Activated CD4-positive, alpha-beta memory T cell treated with anti-CD3 and anti-CD28 coated beads for 36 hours (primary cell): ENCODE measurements at regions of chr4 and their contacts with region 1.

Region 1: DNA sequence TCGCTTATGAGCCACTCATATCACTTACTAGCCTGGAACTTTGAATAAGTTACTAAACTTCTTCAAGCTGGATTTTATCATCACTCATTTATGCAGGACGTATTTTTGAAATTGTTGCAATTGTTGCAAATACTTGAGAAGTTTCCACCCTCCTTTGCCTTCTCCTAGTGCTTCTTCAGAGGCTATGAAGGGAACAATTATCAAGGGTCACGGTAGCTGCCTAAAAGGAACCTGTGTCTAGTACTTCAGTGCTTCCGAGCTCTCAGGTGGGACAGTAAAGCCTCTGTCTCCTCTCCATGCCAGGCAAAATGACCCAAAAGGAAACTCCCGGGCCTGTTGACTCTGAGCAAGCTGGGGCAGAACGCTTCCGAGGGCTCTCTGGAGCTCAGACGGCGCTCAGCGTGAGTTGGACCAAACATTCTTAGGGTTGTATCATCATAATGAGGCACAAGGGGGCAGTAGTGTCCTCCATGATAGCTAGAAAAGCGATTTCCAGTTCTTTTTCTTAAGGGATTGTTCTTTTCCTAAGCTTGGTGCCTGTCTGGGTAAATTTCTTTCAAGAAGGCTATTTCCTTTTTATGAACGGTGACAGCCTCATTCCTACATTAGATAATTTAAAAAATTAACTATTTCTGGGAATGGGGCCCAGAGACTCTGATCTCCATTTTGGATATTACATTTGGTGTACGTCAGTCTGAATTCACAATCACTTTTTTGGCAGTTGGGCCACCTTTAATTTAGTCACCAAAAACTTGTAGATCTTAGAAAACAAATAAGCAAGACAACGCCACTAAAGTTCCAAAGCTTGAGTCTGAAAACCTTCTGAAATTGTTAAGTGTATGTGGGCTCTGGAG is 73.1 kb downstream of the PACRGL start:
- DNase-seq: peak; percentile 17
- H3K4me3 Mint-ChIP-seq: no peak overlapping the region
- H3K27ac Mint-ChIP-seq: no peak overlapping the region
- H3K4me1 Mint-ChIP-seq: no peaks in the 10 kb centered on the region
- H3K27me3 Mint-ChIP-seq: no peaks in the 10 kb centered on the region

Region 2: GRCh38 chr4:20370274-20370673 is 403.1 kb before region 1 on chr4:
- CTCF ChIA-PET with region 1: no interaction called
- POLR2A ChIA-PET with region 1: no interaction called
- intact Hi-C with region 1: no loop called
- DNase-seq: no peak
- H3K4me3 Mint-ChIP-seq: no peak overlapping the region
- H3K27ac Mint-ChIP-seq: no peak overlapping the region
- H3K4me1 Mint-ChIP-seq: no peaks in the 10 kb centered on the region
- H3K27me3 Mint-ChIP-seq: no peaks in the 10 kb centered on the region

Region 3: DNA sequence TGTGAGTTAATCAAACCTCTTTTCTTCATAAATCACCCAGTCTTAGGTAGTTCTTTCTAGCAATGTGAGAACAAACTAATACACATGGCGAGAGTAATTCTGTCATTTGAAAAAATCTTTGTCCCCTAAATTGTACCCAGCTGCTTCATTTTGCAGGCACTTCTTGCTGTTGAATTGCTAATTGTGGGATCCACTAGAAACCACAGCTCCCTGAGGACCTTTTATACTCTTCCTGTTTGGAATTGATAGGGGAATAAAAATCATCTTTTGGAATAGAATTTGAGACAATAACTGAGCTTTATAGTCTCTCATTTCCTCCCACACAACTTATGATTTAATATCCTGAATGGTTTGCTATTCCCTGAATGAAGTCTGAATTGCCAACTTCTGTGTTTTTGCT is 97.1 kb after region 1 on chr4:
- CTCF ChIA-PET with region 1: no interaction called
- POLR2A ChIA-PET with region 1: no interaction called
- intact Hi-C with region 1: no loop called
- DNase-seq: no peak
- H3K4me3 Mint-ChIP-seq: no peak overlapping the region
- H3K27ac Mint-ChIP-seq: no peak overlapping the region
- H3K4me1 Mint-ChIP-seq: peaks cover 2% of the 10 kb centered on the region
- H3K27me3 Mint-ChIP-seq: no peaks in the 10 kb centered on the region

Region 4: GRCh38 chr4:21134994-21135393 is 361.6 kb after region 1 on chr4:
- CTCF ChIA-PET with region 1: interaction called, 25 read pairs
- POLR2A ChIA-PET with region 1: no interaction called
- intact Hi-C with region 1: no loop called
- DNase-seq: no peak
- H3K4me3 Mint-ChIP-seq: no peak overlapping the region
- H3K27ac Mint-ChIP-seq: no peak overlapping the region
- H3K4me1 Mint-ChIP-seq: no peaks in the 10 kb centered on the region
- H3K27me3 Mint-ChIP-seq: no peaks in the 10 kb centered on the region

Region 5: DNA sequence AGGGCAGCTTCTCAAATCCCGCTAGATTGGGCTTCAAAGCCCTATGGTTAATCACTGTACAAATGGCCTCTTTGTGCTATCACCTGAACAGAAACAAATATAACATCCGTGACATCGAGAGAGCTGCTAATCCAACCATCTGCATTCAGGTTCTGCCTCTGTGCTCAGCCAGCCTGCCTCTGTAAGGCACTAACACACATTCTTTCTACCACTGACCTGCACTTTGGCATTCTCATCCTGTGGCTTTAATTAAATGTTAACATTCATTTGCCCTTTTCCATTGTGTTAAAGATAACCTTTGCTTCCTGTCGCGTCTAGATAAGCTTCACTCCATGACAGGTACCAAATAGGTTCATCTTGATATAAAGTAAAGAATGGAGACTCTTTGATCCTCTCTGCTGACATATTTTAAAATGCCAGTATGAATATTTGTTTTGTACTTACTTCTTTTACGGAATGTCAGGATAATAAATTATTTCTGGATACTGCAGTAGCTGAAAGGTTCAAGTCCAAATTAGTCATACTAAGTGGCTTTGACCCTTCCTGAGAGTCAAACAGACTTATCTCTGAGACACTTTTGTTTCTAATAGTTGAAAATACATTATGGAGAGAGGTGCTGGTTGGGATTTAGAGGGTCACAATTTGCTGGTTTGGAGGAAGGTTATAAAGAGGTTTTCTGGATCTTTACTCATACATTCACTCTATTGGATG is 432.6 kb after region 1 on chr4:
- CTCF ChIA-PET with region 1: no interaction called
- POLR2A ChIA-PET with region 1: no interaction called
- intact Hi-C with region 1: no loop called
- DNase-seq: no peak
- H3K4me3 Mint-ChIP-seq: no peak overlapping the region
- H3K27ac Mint-ChIP-seq: no peak overlapping the region
- H3K4me1 Mint-ChIP-seq: no peaks in the 10 kb centered on the region
- H3K27me3 Mint-ChIP-seq: no peaks in the 10 kb centered on the region

Region 6: GRCh38 chr4:21469438-21470300 is 696.3 kb after region 1 on chr4:
- CTCF ChIA-PET with region 1: interaction called, 17 read pairs
- POLR2A ChIA-PET with region 1: no interaction called
- intact Hi-C with region 1: loop called (anchors 5 kb)
- DNase-seq: no peak
- H3K4me3 Mint-ChIP-seq: no peak overlapping the region
- H3K27ac Mint-ChIP-seq: no peak overlapping the region
- H3K4me1 Mint-ChIP-seq: no peaks in the 10 kb centered on the region
- H3K27me3 Mint-ChIP-seq: no peaks in the 10 kb centered on the region

Region 7: DNA sequence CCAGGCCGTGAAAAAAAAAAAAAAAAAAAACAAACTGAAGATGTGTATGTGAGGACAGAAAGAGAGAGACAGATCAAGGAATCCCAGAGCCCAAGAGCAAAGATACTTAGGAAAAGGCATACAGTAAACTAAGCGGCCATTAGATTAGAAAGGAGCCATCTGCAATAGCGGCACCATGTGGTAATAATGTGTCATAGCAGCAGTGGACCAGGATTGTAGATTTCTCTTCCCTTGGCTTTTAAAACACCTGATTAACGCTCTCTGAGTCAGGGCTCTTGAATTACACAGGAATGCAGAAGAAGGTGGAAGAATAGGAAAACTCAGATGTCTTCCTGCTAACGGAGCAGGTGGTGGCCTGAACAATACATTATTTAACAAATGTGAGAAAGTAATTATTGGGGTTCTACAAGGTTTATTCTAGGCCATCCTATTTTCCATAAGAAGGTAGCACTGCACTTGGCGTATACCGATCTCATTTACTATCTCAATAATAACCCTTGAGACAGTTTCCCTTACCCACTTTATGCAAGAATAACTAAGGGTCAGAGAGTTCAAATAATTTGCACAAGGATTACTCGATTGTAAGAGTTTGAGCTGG is 992.5 kb after region 1 on chr4:
- CTCF ChIA-PET with region 1: interaction called, 38 read pairs
- POLR2A ChIA-PET with region 1: interaction called, 3 read pairs
- intact Hi-C with region 1: no loop called
- DNase-seq: peak; percentile 22
- H3K4me3 Mint-ChIP-seq: no peak overlapping the region
- H3K27ac Mint-ChIP-seq: no peak overlapping the region
- H3K4me1 Mint-ChIP-seq: no peaks in the 10 kb centered on the region
- H3K27me3 Mint-ChIP-seq: no peaks in the 10 kb centered on the region